A549 (cell line): ENCODE measurements at regions of chr7 and their contacts with region 1.

Region 1: DNA sequence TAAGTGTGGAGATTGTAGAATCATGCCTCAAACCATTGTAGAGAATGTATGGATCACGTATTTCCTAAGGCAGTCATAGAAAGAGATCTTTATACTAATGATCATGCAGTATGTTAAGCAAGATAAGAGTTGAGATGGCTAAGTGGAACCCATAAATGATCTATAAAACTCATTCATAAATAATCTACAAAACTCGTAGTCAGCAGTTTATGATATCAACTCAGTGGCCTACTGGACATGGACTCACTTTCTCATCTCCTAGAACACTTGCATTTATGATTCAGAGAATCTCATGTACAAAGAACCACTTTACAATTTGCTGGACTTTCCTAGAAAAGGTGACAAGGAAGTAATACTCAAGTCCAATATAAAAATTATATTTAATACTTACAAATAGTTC is 339.6 kb downstream of the PCLO start:
- DNase-seq: no peak
- ATAC-seq: no peak
- H3K4me3 ChIP-seq: no peak overlapping the region
- H3K27ac ChIP-seq: no peak overlapping the region
- H3K4me1 ChIP-seq: no peaks in the 10 kb centered on the region
- CTCF ChIP-seq: no peak
- EP300 ChIP-seq: no peak
- POLR2A ChIP-seq: no peak
- RAD21 ChIP-seq: no peak

Region 2: GRCh38 chr7:82810558-82811259 is 12.4 kb before region 1 on chr7:
- CTCF ChIA-PET with region 1: interaction called, 10 read pairs
- POLR2A ChIA-PET with region 1: no interaction called
- DNase-seq: peak; percentile 34 to 63
- ATAC-seq: peak; percentile 83 to 90
- H3K4me3 ChIP-seq: no peak overlapping the region
- H3K27ac ChIP-seq: no peak overlapping the region
- H3K4me1 ChIP-seq: peaks cover 2% of the 10 kb centered on the region
- CTCF ChIP-seq: peak; percentile 87
- EP300 ChIP-seq: no peak
- POLR2A ChIP-seq: no peak
- RAD21 ChIP-seq: peak; percentile 62 to 66